Activated CD8-positive, alpha-beta T cell treated with anti-CD3 and anti-CD28 coated beads, Interleukin-2, amount 10 ng/mL, durations not matched to agents 7 days and 5 days (primary cell): ENCODE measurements at regions of chr7 and their contacts with region 1.

Region 1: DNA sequence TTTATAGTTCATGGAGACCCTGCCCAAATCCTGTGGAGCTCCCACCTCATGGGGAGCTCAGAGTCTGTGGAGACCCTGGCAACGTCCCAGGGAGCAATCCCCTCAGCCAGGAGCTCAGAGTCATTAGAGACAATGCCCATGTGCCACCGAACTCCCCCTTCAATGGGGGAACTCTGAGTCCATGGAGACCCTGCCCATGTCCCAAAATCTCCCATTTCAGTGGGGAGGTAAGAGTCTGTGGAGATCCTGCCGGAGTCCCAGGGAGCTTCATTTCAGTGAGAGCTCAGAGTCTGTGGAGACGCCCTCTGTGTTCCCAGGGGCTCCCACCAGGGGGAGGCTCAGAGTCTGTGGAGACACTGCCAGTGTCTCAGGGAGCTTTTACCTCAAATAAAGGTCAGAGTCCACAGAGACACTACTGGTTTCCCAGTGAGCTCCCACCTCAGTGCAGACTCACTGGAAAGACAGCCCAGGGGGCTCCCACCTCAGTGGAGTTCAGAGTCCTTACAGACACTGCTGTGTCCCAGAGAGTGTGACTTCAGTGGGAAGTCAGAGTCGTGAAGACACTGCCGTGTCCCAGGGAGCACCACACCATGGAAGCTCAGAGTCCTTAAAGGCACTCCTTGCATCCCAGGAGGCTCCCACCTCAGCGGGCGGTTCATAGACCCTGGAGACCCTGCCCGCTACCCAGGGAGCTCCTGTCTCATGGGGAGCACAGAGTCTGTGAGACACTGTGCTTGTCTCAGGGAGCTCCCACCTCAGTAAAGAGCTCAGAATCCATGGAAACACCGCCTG is 5.0 kb downstream of the MYO1G start:
- DNase-seq: peak; percentile 74
- ATAC-seq: peak; percentile 26
- H3K4me3 Mint-ChIP-seq: no peak overlapping the region
- H3K27ac Mint-ChIP-seq: peak overlapping the region; percentile 65
- H3K4me1 Mint-ChIP-seq: peaks cover 51% of the 10 kb centered on the region
- H3K27me3 Mint-ChIP-seq: no peaks in the 10 kb centered on the region

Region 2: GRCh38 chr7:44955733-44956132 is 18.1 kb before region 1 on chr7:
- CTCF ChIA-PET with region 1: interaction called, 3 read pairs
- POLR2A ChIA-PET with region 1: interaction called, 96 read pairs
- DNase-seq: no peak
- ATAC-seq: no peak
- H3K4me3 Mint-ChIP-seq: no peak overlapping the region
- H3K27ac Mint-ChIP-seq: no peak overlapping the region
- H3K4me1 Mint-ChIP-seq: peaks cover 18% of the 10 kb centered on the region
- H3K27me3 Mint-ChIP-seq: peaks cover 24% of the 10 kb centered on the region

Region 3: GRCh38 chr7:44986218-44987053 is 12.6 kb after region 1 on chr7:
- CTCF ChIA-PET with region 1: interaction called, 28 read pairs
- POLR2A ChIA-PET with region 1: interaction called, 39 read pairs
- DNase-seq: peak; percentile 97
- ATAC-seq: peak; percentile 96
- H3K4me3 Mint-ChIP-seq: peak overlapping the region; percentile 99
- H3K27ac Mint-ChIP-seq: peak overlapping the region; percentile 99
- H3K4me1 Mint-ChIP-seq: peaks cover 54% of the 10 kb centered on the region
- H3K27me3 Mint-ChIP-seq: no peaks in the 10 kb centered on the region

Region 4: DNA sequence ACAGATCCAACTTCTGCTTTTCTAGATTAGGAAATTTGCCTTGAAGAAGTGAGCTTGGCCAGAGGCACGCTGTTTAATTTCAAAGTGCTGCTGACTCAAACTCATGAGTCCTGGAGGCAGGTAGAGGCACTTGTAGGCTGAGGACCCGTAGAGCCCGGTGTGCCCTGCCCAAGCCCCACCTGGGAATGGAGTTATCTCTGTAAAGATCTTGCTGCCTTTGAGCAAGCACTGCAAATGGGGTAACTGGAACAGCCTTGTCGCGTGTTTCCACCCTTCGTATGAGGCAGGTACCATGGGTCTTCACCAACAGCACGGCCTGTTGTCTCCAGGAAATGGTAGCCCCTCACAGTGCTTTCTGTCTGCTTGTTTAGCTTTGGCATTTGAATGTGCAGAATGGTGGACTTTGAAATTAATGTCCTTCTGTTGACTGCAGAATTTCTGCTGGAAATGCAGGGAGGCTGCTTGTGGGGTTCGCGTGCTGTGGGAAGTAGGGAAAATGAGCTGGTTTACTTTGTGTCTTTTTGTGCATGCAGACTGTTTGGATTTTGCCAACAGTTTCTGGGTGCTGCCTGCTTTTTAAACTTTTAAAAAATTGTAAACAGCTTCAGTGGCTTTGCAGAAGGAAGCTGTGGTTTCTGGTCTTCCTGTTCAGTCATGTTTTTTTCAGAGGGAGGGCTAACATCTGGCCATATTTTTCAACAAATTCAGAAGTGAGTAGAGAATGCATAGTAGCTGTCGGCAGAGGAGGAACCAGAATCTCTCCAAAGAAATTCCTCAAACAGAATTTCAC is 53.4 kb after region 1 on chr7:
- CTCF ChIA-PET with region 1: interaction called, 38 read pairs
- POLR2A ChIA-PET with region 1: interaction called, 125 read pairs
- DNase-seq: peak; percentile 56
- ATAC-seq: peak; percentile 57
- H3K4me3 Mint-ChIP-seq: peak overlapping the region; percentile 80
- H3K27ac Mint-ChIP-seq: peak overlapping the region; percentile 84
- H3K4me1 Mint-ChIP-seq: peaks cover 67% of the 10 kb centered on the region
- H3K27me3 Mint-ChIP-seq: no peaks in the 10 kb centered on the region

Region 5: GRCh38 chr7:45111298-45112223 is 137.8 kb after region 1 on chr7 and contains the start of gene TBRG4:
- CTCF ChIA-PET with region 1: interaction called, 9 read pairs
- POLR2A ChIA-PET with region 1: interaction called, 13 read pairs
- DNase-seq: peak; percentile 97
- ATAC-seq: peak; percentile 90
- H3K4me3 Mint-ChIP-seq: peak within 1 kb of the TSS; percentile 90
- H3K27ac Mint-ChIP-seq: peak within 1 kb of the TSS; percentile 97
- H3K4me1 Mint-ChIP-seq: peaks cover 41% of the 10 kb centered on the region
- H3K27me3 Mint-ChIP-seq: peaks cover 16% of the 10 kb centered on the region
- total RNA-seq, gene TBRG4: 133 to 137 TPM